AG04450 (cell line): ENCODE measurements at regions of chr10 and their contacts with region 1.

Region 1: DNA sequence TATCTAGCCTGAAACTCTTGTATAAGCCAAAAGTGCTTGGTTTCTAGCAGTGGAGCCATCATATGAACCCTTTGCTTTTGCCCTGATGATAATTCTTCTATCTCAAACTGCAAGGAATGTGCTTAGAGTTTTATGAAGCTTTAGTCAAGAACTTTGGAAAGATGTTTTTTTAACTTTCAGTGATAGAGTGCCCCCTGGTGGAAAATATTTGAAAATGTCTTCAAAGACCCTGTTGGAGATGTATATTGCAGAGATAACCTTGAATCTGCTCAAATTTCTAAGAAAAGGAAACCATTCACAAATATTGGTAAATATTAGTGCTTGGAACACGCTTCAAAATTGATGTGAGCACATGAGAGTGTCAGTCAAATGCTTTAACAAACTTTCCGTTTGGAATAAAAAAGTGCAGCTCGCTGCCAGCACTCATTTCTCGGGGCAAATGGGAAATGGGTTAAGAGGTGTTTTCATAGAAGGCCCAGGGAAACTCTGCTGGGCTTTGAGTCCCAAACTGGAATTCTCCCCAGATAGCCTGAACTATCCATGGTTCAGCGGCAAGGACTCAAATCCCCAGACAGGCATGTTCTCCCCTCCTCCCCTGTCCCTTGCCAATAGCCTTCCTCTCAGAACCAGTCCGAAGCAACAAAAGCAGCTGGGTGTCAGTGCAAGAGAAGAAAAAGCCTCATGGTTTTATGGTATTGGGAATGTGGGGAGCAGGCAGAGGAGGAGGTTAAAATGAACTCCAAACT is 129.3 kb downstream of the MYOF start:
- DNase-seq: no peak
- H3K4me3 ChIP-seq: no peak overlapping the region
- H3K27ac ChIP-seq: no peak overlapping the region
- H3K27me3 ChIP-seq: no peaks in the 10 kb centered on the region
- CTCF ChIP-seq: peak; percentile 57

Region 2: GRCh38 chr10:92938841-92939240 is 414.0 kb before region 1 on chr10:
- CTCF ChIA-PET with region 1: no interaction called
- POLR2A ChIA-PET with region 1: no interaction called
- DNase-seq: no peak
- H3K4me3 ChIP-seq: no peak overlapping the region
- H3K27ac ChIP-seq: no peak overlapping the region
- H3K27me3 ChIP-seq: no peaks in the 10 kb centered on the region
- CTCF ChIP-seq: no peak

Region 3: GRCh38 chr10:93280699-93281366 is 72.0 kb before region 1 on chr10:
- CTCF ChIA-PET with region 1: no interaction called
- POLR2A ChIA-PET with region 1: no interaction called
- DNase-seq: no peak
- H3K4me3 ChIP-seq: no peak overlapping the region
- H3K27ac ChIP-seq: no peak overlapping the region
- H3K27me3 ChIP-seq: peaks cover 2% of the 10 kb centered on the region
- CTCF ChIP-seq: no peak

Region 4: DNA sequence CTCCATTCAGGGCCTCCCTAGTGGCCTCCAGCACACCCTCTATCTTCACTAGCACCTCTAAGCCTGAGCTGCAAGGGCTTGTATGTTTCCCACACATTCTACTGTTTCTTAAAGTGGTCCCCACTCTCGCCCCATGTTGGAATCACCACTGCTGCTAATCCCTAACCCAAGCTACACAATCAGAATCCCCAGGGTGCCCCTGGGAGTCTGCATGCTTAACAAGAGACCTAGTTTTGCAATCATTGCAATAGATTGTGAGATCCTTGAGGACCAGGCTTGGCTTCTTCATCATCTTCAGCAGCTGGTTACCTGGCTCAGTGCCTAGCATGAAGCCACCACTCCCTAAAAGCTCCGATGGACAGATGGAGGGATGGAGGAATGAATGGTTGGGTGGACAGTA is 15.4 kb after region 1 on chr10:
- CTCF ChIA-PET with region 1: interaction called, 45 read pairs
- POLR2A ChIA-PET with region 1: no interaction called
- DNase-seq: no peak
- H3K4me3 ChIP-seq: no peak overlapping the region
- H3K27ac ChIP-seq: no peak overlapping the region
- H3K27me3 ChIP-seq: no peaks in the 10 kb centered on the region
- CTCF ChIP-seq: no peak

Region 5: DNA sequence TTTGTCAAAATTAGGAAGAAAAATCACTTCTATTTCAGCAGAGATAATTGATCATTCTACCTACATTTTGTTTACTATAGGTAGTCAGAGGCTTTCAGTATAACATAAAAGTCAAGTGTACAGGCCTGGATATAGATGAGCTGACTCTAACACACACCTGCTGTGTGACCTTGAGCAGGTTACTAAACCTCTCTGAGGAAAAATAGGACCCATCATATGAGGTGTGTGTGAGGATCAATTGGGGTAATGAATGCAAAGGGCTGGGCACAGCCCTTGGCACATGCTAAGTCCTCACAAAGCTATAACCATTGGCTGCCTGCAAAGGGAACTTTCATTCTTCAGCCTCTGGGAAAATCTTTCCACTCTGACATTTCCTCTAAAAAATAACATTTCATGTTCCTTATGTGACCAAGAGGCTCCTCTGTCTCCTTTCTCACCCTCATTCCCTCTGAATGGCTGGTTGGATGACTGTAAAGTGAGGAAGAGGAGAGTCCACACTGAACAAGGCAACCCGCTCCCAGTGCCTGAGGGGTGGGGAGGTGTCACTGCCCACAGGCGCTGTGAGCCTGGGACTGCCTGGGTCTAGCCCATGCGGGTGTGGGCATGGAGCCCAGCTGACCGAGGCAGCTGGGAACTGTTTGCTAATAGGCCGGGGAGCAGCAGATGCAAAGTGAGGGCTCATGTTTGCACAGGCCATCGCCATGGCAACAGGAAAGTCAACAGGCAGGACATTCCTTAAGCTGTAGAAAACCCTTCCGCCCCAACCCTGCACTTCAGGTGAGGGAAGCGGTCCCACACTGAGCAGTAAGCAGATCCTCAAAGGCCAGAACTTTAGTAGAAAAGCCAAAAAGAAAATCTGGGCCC is 92.5 kb after region 1 on chr10:
- CTCF ChIA-PET with region 1: no interaction called
- POLR2A ChIA-PET with region 1: no interaction called
- DNase-seq: peak; percentile 93
- H3K4me3 ChIP-seq: no peak overlapping the region
- H3K27ac ChIP-seq: peak overlapping the region; percentile 85
- H3K27me3 ChIP-seq: no peaks in the 10 kb centered on the region
- CTCF ChIP-seq: no peak

Region 6: DNA sequence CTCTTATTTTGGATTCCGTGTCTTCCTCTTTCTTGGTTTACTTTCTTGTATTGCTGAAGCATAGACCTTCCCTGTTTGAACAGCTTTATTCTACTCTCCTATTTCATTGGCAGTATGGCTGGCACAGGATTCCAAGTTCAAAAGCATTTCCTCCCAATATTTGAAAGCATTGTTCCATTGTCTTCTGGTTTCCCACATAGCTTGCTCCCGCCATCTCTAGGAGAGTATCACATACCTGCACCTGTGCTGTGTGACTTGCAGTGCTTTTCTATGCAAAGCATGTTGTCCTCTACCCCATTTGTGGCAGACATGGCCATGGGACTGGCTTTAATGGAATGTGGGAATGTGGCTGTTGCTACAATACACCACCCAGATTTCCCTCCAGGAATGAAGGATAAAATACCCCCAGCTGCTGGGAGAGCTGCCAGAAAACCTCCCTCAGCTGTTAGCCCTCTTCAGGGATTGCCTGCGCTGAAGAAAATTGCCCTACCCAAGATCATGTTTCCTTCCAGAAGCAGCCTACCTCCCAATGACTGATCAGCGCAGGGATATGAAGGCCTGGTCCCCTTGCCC is 136.2 kb after region 1 on chr10:
- CTCF ChIA-PET with region 1: interaction called, 29 read pairs
- POLR2A ChIA-PET with region 1: no interaction called
- DNase-seq: no peak
- H3K4me3 ChIP-seq: no peak overlapping the region
- H3K27ac ChIP-seq: no peak overlapping the region
- H3K27me3 ChIP-seq: no peaks in the 10 kb centered on the region
- CTCF ChIP-seq: no peak

Region 7: GRCh38 chr10:93503075-93503474 is 150.3 kb after region 1 on chr10:
- CTCF ChIA-PET with region 1: interaction called, 15 read pairs
- POLR2A ChIA-PET with region 1: no interaction called
- DNase-seq: no peak
- H3K4me3 ChIP-seq: no peak overlapping the region
- H3K27ac ChIP-seq: no peak overlapping the region
- H3K27me3 ChIP-seq: no peaks in the 10 kb centered on the region
- CTCF ChIP-seq: no peak